Activated CD4-positive, alpha-beta memory T cell treated with anti-CD3 and anti-CD28 coated beads for 36 hours (primary cell): ENCODE measurements at regions of chr10 and their contacts with region 1.

Region 1: GRCh38 chr10:26556748-26557640 is 118.9 kb downstream of the APBB1IP start:
- DNase-seq: peak; percentile 37
- H3K4me3 Mint-ChIP-seq: no peak overlapping the region
- H3K27ac Mint-ChIP-seq: no peak overlapping the region
- H3K4me1 Mint-ChIP-seq: no peaks in the 10 kb centered on the region
- H3K27me3 Mint-ChIP-seq: no peaks in the 10 kb centered on the region

Region 2: GRCh38 chr10:26025523-26025922 is 531.5 kb before region 1 on chr10:
- CTCF ChIA-PET with region 1: no interaction called
- POLR2A ChIA-PET with region 1: no interaction called
- intact Hi-C with region 1: no loop called
- DNase-seq: no peak
- H3K4me3 Mint-ChIP-seq: no peak overlapping the region
- H3K27ac Mint-ChIP-seq: no peak overlapping the region
- H3K4me1 Mint-ChIP-seq: no peaks in the 10 kb centered on the region
- H3K27me3 Mint-ChIP-seq: peaks cover 2% of the 10 kb centered on the region

Region 3: DNA sequence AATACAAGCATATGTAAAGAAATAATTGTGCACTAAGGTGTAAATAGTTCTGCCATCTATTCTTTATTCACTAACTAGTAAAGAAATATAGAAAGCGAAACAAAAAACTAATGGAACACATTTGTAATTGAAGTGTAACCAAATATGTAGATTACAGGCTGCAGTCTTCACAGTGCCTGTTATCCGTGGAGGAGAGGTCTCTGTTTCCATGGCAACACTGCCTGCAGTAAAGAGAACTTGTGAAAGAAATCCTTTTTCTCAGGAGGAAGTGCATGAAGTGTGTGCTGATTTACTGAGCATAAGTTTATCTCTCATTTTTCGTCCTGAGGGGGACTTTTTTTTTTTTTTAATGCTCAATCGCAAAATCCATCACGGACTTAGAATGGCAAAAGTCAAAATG is 16.4 kb before region 1 on chr10:
- CTCF ChIA-PET with region 1: no interaction called
- POLR2A ChIA-PET with region 1: no interaction called
- intact Hi-C with region 1: no loop called
- DNase-seq: no peak
- H3K4me3 Mint-ChIP-seq: no peak overlapping the region
- H3K27ac Mint-ChIP-seq: no peak overlapping the region
- H3K4me1 Mint-ChIP-seq: peaks cover 21% of the 10 kb centered on the region
- H3K27me3 Mint-ChIP-seq: no peaks in the 10 kb centered on the region

Region 4: DNA sequence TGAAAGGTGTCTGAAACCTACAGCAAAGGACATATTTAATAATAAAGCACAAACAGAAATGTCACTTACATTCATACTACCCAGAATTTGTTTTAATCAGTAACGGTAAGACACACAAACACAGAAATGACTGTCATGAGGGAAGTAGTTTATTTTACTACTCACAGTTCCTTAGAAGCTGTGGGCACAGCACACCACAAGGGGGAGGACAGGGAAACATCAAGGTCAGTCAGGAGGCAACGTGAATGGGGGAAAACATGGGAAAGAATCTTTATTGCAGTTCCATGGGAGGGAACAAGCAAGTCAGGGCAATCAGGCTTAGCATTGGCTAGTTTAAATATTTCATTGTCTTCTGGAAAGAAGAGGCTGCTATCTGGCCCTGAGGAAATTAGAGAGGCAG is 16.7 kb after region 1 on chr10:
- CTCF ChIA-PET with region 1: no interaction called
- POLR2A ChIA-PET with region 1: no interaction called
- intact Hi-C with region 1: loop called (anchors 1 kb)
- DNase-seq: no peak
- H3K4me3 Mint-ChIP-seq: no peak overlapping the region
- H3K27ac Mint-ChIP-seq: no peak overlapping the region
- H3K4me1 Mint-ChIP-seq: peaks cover 4% of the 10 kb centered on the region
- H3K27me3 Mint-ChIP-seq: no peaks in the 10 kb centered on the region